ENCODE measurements at regions of chr12 and their contacts with region 1.

Region 1: GRCh38 chr12:122642009-122642408 is 61.1 kb downstream of the HCAR2 start:
- DNase-seq: no peak
- H3K4me3 ChIP-seq: no peak overlapping the region
- H3K27ac ChIP-seq: no peak overlapping the region
- H3K4me1 ChIP-seq: no peaks in the 10 kb centered on the region
- H3K27me3 ChIP-seq: no peaks in the 10 kb centered on the region
- CTCF ChIP-seq: no peak
- POLR2A ChIP-seq: no peak

Region 2: GRCh38 chr12:122691575-122691965 is 49.6 kb after region 1 on chr12:
- CTCF ChIA-PET with region 1: interaction called, 11 read pairs
- POLR2A ChIA-PET with region 1: no interaction called
- dilution Hi-C with region 1: no loop called
- intact Hi-C with region 1: no loop called
- DNase-seq: no peak
- H3K4me3 ChIP-seq: no peak overlapping the region
- H3K27ac ChIP-seq: no peak overlapping the region
- H3K4me1 ChIP-seq: no peaks in the 10 kb centered on the region
- H3K27me3 ChIP-seq: no peaks in the 10 kb centered on the region
- CTCF ChIP-seq: no peak
- POLR2A ChIP-seq: no peak

Region 3: GRCh38 chr12:122730215-122731014 is 88.4 kb after region 1 on chr12 and contains the start of gene HCAR1:
- CTCF ChIA-PET with region 1: interaction called, 13 read pairs
- POLR2A ChIA-PET with region 1: no interaction called
- dilution Hi-C with region 1: no loop called
- intact Hi-C with region 1: no loop called
- DNase-seq: no peak
- H3K4me3 ChIP-seq: no peak within 1 kb of the TSS
- H3K27ac ChIP-seq: no peak within 1 kb of the TSS
- H3K4me1 ChIP-seq: peaks cover 10% of the 10 kb centered on the region
- H3K27me3 ChIP-seq: no peaks in the 10 kb centered on the region
- CTCF ChIP-seq: no peak
- POLR2A ChIP-seq: no peak
- total RNA-seq, gene HCAR1: not detected in 2 replicates

Measured in endothelial cell of umbilical vein (primary cell).